Activated CD8-positive, alpha-beta T cell treated with anti-CD3 and anti-CD28 coated beads for 36 hours (primary cell): ENCODE measurements at regions of chr15 and their contacts with region 1.

Region 1: GRCh38 chr15:60916679-60917460 is 312.2 kb downstream of the RORA start:
- DNase-seq: peak; percentile 95
- ATAC-seq: peak; percentile 95
- H3K4me3 Mint-ChIP-seq: no peak overlapping the region
- H3K27ac Mint-ChIP-seq: no peak overlapping the region
- H3K4me1 Mint-ChIP-seq: peaks cover 9% of the 10 kb centered on the region
- H3K27me3 Mint-ChIP-seq: no peaks in the 10 kb centered on the region
- CTCF ChIP-seq: peak; percentile 86

Region 2: GRCh38 chr15:60563539-60564404 is 353.1 kb before region 1 on chr15:
- CTCF ChIA-PET with region 1: no interaction called
- POLR2A ChIA-PET with region 1: no interaction called
- intact Hi-C with region 1: no loop called
- DNase-seq: no peak
- ATAC-seq: peak; percentile 54
- H3K4me3 Mint-ChIP-seq: no peak overlapping the region
- H3K27ac Mint-ChIP-seq: peak overlapping the region; percentile 72
- H3K4me1 Mint-ChIP-seq: peaks cover 73% of the 10 kb centered on the region
- H3K27me3 Mint-ChIP-seq: no peaks in the 10 kb centered on the region
- CTCF ChIP-seq: no peak

Region 3: DNA sequence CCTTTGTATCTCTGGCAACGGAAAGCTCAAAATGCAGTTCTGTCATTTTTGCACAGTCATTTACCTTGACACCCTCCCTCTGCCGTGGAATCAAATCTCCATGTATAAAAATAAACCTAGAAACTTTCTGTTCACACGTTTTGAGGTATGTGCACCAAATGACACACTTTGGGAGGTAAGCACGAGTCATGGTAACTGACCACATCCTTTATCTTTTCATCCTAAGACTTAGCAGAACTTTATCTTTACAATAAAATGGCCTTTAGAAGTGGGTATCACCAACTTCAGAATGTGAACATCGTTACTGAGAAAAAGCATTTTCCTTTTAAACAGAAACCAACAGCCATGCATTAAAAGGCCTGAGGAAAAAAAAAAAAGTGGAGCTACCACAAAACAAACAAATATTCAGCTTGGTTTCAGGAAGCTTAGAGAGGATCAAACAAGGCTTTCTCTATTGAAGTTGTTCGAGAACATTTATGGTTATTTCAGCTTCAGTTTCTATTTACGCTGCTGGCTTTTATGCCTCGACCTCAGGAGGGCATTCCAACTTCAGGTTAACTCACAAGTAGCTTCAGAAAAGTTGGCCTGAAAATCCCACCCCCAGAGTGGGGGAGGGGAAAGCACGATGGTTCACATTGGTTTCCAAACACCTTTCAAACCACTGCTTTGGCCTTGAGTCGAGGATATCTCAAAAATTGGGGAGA is 266.9 kb before region 1 on chr15:
- CTCF ChIA-PET with region 1: interaction called, 12 read pairs
- POLR2A ChIA-PET with region 1: no interaction called
- intact Hi-C with region 1: no loop called
- DNase-seq: peak; percentile 66
- ATAC-seq: peak; percentile 85
- H3K4me3 Mint-ChIP-seq: peak overlapping the region; percentile 63
- H3K27ac Mint-ChIP-seq: peak overlapping the region; percentile 84
- H3K4me1 Mint-ChIP-seq: peaks cover 35% of the 10 kb centered on the region
- H3K27me3 Mint-ChIP-seq: no peaks in the 10 kb centered on the region
- CTCF ChIP-seq: no peak

Region 4: DNA sequence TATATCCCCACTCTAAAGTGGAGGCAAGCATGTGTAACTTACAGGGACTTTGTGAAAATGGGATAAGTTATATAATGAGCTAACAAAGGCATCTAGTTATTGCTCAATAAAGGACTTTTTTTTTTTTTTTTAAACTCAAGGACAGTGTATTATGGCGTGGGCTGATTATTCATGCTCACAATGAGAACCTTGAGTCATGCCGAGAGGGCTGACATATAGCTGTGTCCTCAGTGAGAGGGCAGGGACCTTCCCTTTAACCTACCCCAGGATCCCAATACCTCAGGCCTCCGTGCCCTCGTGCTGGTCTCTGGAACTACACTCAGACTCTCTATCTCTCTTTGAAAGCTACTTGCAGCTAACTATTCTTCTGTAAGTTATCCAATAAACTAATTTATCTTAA is 118.0 kb before region 1 on chr15:
- CTCF ChIA-PET with region 1: interaction called, 10 read pairs
- POLR2A ChIA-PET with region 1: no interaction called
- intact Hi-C with region 1: no loop called
- DNase-seq: peak; percentile 78
- ATAC-seq: peak; percentile 81
- H3K4me3 Mint-ChIP-seq: no peak overlapping the region
- H3K27ac Mint-ChIP-seq: peak overlapping the region; percentile 78
- H3K4me1 Mint-ChIP-seq: peaks cover 76% of the 10 kb centered on the region
- H3K27me3 Mint-ChIP-seq: no peaks in the 10 kb centered on the region
- CTCF ChIP-seq: no peak

Region 5: DNA sequence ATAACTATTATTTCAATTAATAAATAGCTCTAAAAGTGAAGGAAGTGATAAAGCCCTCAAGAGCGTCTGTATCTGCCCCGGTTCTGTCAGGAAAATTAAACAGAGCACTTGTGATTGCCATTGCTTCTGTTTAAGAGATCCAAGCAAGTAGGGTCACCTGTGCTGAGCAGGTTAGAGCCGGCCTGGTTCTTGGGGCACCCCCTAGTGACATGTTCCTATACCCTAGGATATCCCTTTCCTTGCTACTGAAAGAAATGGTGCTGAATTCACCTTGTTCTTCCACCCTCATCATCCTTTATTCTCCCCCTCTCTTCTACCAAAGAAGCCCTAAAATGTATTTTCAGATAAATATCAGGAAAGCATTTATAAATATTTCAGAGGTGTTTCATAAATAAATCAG is 11.3 kb before region 1 on chr15:
- CTCF ChIA-PET with region 1: interaction called, 32 read pairs
- POLR2A ChIA-PET with region 1: interaction called, 5 read pairs
- intact Hi-C with region 1: no loop called
- DNase-seq: peak; percentile 24
- ATAC-seq: no peak
- H3K4me3 Mint-ChIP-seq: no peak overlapping the region
- H3K27ac Mint-ChIP-seq: no peak overlapping the region
- H3K4me1 Mint-ChIP-seq: peaks cover 34% of the 10 kb centered on the region
- H3K27me3 Mint-ChIP-seq: peaks cover 2% of the 10 kb centered on the region
- CTCF ChIP-seq: no peak